ENCODE measurements at regions of chr2 and their contacts with region 1.

Region 1: DNA sequence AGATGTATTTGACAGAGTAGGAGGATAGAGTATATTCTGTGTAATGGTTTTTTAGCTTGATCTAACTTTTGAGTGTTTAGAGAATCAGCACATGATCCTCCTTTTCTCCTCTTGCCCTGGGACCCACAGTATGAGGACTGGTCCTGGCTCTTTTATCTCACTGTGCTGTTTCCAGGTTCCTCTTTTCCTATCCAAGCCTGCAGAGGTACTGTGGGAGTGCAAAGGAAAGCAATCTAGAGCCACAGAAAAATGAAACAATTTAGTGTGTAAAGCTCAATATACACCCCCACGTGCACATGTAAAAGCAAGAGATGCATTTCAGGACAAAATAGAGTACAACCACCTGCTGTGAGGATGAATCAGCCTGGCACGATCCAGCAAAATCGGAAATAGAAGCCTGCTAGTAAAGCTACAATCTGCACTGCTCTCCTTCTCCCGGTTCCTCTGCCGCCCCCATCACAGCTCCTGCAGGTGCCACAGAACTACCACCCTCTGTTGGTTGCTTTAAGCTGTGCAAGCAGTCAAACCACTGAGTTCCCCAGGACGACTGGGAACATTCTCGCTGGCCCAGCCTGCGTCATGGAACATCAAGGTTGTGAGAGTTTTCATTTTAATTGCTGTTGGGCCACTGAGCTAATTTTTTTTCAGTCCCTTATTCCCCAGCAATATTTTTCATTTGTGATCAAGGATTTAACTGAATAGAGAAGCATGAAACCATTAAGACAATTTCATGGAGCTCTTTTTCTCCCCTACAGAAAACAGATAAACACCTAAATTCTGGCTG is 47.8 kb upstream of the MAPRE3 start:
- DNase-seq: peak; percentile 17 to 21
- ATAC-seq: peak; percentile 79 to 86
- H3K4me3 ChIP-seq: no peak overlapping the region
- H3K27ac ChIP-seq: no peak overlapping the region
- H3K4me1 ChIP-seq: no peaks in the 10 kb centered on the region
- H3K27me3 ChIP-seq: no peaks in the 10 kb centered on the region
- CTCF ChIP-seq: peak in 4 of 5 experiments; percentile 33 to 63 (median 46)
- POLR2A ChIP-seq: no peak

Region 2: DNA sequence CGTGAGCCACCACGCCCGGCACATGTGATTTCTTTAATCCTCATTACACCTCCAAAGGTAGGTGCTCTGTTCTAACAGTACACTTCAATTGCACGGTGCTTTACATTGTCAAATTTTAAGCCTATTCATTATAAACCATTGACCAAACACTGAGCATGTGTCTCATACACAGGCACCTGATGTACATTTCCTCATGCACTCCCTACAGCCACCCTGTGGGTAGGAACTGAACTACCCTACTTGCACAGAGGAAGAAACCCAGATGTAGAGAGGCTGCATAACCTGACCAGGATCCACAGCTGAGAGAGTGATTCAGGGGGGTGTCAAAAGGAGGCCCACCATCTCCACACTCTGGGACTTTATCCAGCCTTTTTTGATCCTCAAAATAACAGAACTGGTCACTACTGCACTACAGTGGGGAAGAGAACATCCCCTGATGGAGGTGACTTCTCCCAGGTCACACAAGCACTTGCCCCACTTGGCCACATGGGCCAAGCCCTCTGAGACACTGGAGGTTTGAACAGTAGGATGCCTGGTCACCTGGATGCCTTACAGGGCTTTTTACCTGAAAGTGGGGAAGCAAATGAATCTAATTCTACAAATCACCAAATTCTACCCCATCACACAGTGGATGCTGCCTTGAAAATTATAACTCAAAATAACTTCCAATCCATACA is 81.5 kb before region 1 on chr2:
- in situ Hi-C with region 1: loop called in 2 of 4 experiments (anchors 5 to 25 kb)
- intact Hi-C with region 1: loop called (anchors 1 kb)
- DNase-seq: no peak
- ATAC-seq: no peak
- H3K4me3 ChIP-seq: no peak overlapping the region
- H3K27ac ChIP-seq: no peak overlapping the region
- H3K4me1 ChIP-seq: no peaks in the 10 kb centered on the region
- H3K27me3 ChIP-seq: peaks cover 13 to 39% (median 29%) of the 10 kb centered on the region in 3 donors
- CTCF ChIP-seq: no peak
- POLR2A ChIP-seq: no peak

Region 3: GRCh38 chr2:26846328-26847306 is 76.0 kb before region 1 on chr2:
- in situ Hi-C with region 1: loop called in 2 of 4 experiments (anchors 5 to 25 kb)
- intact Hi-C with region 1: loop called (anchors 1 kb)
- DNase-seq: peak; percentile 25 to 37
- ATAC-seq: peak; percentile 64 to 82
- H3K4me3 ChIP-seq: no peak overlapping the region
- H3K27ac ChIP-seq: no peak overlapping the region
- H3K4me1 ChIP-seq: peaks cover 7 to 27% of the 10 kb centered on the region in 2 donors
- H3K27me3 ChIP-seq: peaks cover 43 to 70% (median 60%) of the 10 kb centered on the region in 3 donors
- CTCF ChIP-seq: peak; percentile 58 to 81 (median 73)
- POLR2A ChIP-seq: no peak

Measured in gastrocnemius medialis (tissue), 4 donors.